ENCODE measurements at regions of chr10 and their contacts with region 1.

Region 1: GRCh38 chr10:13160934-13161856 is at the start of gene MCM10:
- DNase-seq: peak; percentile 97 to 98 (median 98)
- ATAC-seq: peak; percentile 100
- H3K4me3 ChIP-seq: peak within 1 kb of the TSS in 11 of 12 donors; percentile 24 to 72 (median 51)
- H3K27ac ChIP-seq: no peak within 1 kb of the TSS
- H3K4me1 ChIP-seq: peaks cover 0 to 18% (median 9%) of the 10 kb centered on the region in 12 donors
- H3K27me3 ChIP-seq: no peaks in the 10 kb centered on the region
- CTCF ChIP-seq: peak; percentile 82 to 95 (median 88)
- POLR2A ChIP-seq: no peak
- total RNA-seq, gene MCM10: 0.16 to 4.2 (median 0.36) TPM in 6 of 9 donors, not detected in the others

Region 2: DNA sequence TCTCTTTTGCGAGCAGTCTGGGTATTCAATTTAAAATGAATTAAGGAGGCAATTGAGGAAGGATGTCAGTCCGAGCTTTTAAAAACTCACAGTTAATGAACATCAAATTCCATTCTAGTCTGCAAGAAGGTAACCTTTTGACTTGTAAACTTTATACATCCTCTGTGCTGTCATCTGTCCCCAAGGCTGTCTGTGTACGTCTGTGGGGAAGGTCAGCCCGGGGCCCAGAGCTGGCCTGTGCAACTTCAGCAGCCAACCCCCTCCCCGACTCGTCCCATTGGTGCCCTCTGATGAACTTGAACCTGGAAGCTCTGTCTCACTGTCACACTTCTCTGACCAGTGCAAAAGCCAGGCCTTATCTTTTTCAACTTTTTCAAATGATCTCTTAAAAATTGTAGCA is 240.0 kb before region 1 on chr10:
- intact Hi-C with region 1: no loop called
- DNase-seq: no peak
- ATAC-seq: no peak
- H3K4me3 ChIP-seq: no peak overlapping the region
- H3K27ac ChIP-seq: no peak overlapping the region
- H3K4me1 ChIP-seq: no peaks in the 10 kb centered on the region
- H3K27me3 ChIP-seq: no peaks in the 10 kb centered on the region
- CTCF ChIP-seq: no peak
- POLR2A ChIP-seq: no peak

Region 3: DNA sequence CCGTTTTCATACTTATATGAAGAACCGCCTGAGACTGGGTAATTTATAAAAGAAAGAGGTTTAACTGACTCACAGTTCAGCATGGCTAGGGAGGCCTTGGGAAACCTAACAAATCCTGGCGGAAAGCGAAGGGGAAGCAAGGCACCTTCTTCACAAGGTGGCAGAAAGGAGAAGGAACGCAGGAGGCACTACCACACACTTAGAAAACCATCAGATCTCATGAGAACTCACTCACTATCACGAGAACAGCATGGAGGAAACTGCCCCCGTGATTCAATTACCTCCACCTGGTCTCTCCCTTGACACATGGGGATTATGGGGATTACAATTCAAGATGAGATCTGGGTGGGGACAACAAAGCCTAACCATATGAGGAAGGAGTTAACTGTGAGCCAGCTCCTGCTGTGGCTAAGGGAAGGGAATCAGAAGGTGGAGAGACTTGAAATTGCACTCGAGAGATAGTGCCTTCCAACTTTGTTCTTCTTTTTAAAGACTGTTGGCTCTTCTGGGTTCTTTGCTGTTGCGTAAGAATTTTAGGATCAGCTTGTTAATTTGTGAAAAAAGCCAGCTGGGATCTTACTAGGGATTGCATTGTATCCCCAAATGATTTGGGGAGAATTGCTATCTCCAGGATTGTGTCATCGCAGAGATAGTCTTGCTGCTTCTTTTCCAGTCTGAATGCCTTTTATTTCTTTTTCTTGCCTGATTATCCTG is 40.3 kb before region 1 on chr10:
- intact Hi-C with region 1: no loop called
- DNase-seq: no peak
- ATAC-seq: peak in 3 of 4 donors; percentile 23 to 33 (median 26)
- H3K4me3 ChIP-seq: no peak overlapping the region
- H3K27ac ChIP-seq: peak overlapping the region in 2 of 12 donors; percentile 38 to 44
- H3K4me1 ChIP-seq: peaks cover 0 to 50% (median 19%) of the 10 kb centered on the region in 12 donors
- H3K27me3 ChIP-seq: no peaks in the 10 kb centered on the region
- CTCF ChIP-seq: no peak
- POLR2A ChIP-seq: no peak

Region 4: GRCh38 chr10:13271552-13272163 is 110.5 kb after region 1 on chr10:
- intact Hi-C with region 1: loop called in 1 of 10 experiments (anchors 10 kb)
- DNase-seq: peak in 4 of 5 donors; percentile 13 to 63 (median 39)
- ATAC-seq: peak in 3 of 4 donors; percentile 47 to 59 (median 48)
- H3K4me3 ChIP-seq: no peak overlapping the region
- H3K27ac ChIP-seq: peak overlapping the region in 5 of 12 donors; percentile 5 to 43 (median 29)
- H3K4me1 ChIP-seq: peaks cover 0 to 15% (median 3%) of the 10 kb centered on the region in 12 donors
- H3K27me3 ChIP-seq: no peaks in the 10 kb centered on the region
- CTCF ChIP-seq: peak in 7 of 12 donors; percentile 7 to 48 (median 36)
- POLR2A ChIP-seq: no peak

Region 5: GRCh38 chr10:13348216-13349017 is 187.2 kb after region 1 on chr10 and contains the start of gene SEPHS1:
- intact Hi-C with region 1: loop called in 1 of 10 experiments (anchors 5 kb)
- DNase-seq: peak; percentile 77 to 85 (median 78)
- ATAC-seq: peak; percentile 53 to 83 (median 74)
- H3K4me3 ChIP-seq: peak within 1 kb of the TSS; percentile 68 to 93 (median 88)
- H3K27ac ChIP-seq: peak within 1 kb of the TSS; percentile 92 to 98 (median 95)
- H3K4me1 ChIP-seq: peaks cover 0 to 35% (median 22%) of the 10 kb centered on the region in 12 donors
- H3K27me3 ChIP-seq: peaks cover 0 to 23% (median 14%) of the 10 kb centered on the region in 9 donors
- CTCF ChIP-seq: peak in 2 of 12 donors; percentile 21 to 28
- POLR2A ChIP-seq: no peak
- total RNA-seq, gene SEPHS1: 27.5 to 36.7 (median 31.1) TPM

Region 6: GRCh38 chr10:13518076-13518692 is 357.0 kb after region 1 on chr10:
- intact Hi-C with region 1: loop called in 3 of 10 experiments (anchors 10 kb)
- DNase-seq: no peak
- ATAC-seq: peak in 3 of 4 donors; percentile 44 to 59 (median 48)
- H3K4me3 ChIP-seq: peak overlapping the region in 1 of 12 donors; percentile 15
- H3K27ac ChIP-seq: no peak overlapping the region
- H3K4me1 ChIP-seq: peaks cover 0 to 6% (median 0%) of the 10 kb centered on the region in 12 donors
- H3K27me3 ChIP-seq: no peaks in the 10 kb centered on the region
- CTCF ChIP-seq: peak in 9 of 12 donors; percentile 6 to 40 (median 24)
- POLR2A ChIP-seq: no peak

Region 7: GRCh38 chr10:13536674-13537366 is 375.6 kb after region 1 on chr10:
- intact Hi-C with region 1: loop called in 1 of 10 experiments (anchors 10 kb)
- DNase-seq: peak; percentile 28 to 76 (median 47)
- ATAC-seq: peak; percentile 61 to 87 (median 80)
- H3K4me3 ChIP-seq: no peak overlapping the region
- H3K27ac ChIP-seq: no peak overlapping the region
- H3K4me1 ChIP-seq: no peaks in the 10 kb centered on the region
- H3K27me3 ChIP-seq: peaks cover 0 to 21% (median 3%) of the 10 kb centered on the region in 9 donors
- CTCF ChIP-seq: peak; percentile 48 to 70 (median 58)
- POLR2A ChIP-seq: no peak

Measured in heart left ventricle (tissue), 16 donors.